ENCODE measurements at regions of chr3 and their contacts with region 1.

Region 1: GRCh38 chr3:69178838-69179739 is 56.7 kb upstream of the LMOD3 start:
- DNase-seq: no peak
- H3K4me3 ChIP-seq: no peak overlapping the region
- H3K27ac ChIP-seq: peak overlapping the region in 3 of 4 donors; percentile 27 to 47 (median 39)
- H3K4me1 ChIP-seq: peaks cover 0 to 41% (median 6%) of the 10 kb centered on the region in 3 donors
- H3K27me3 ChIP-seq: no peaks in the 10 kb centered on the region
- CTCF ChIP-seq: peak in 1 of 6 experiments; percentile 22
- POLR2A ChIP-seq: no peak

Region 2: DNA sequence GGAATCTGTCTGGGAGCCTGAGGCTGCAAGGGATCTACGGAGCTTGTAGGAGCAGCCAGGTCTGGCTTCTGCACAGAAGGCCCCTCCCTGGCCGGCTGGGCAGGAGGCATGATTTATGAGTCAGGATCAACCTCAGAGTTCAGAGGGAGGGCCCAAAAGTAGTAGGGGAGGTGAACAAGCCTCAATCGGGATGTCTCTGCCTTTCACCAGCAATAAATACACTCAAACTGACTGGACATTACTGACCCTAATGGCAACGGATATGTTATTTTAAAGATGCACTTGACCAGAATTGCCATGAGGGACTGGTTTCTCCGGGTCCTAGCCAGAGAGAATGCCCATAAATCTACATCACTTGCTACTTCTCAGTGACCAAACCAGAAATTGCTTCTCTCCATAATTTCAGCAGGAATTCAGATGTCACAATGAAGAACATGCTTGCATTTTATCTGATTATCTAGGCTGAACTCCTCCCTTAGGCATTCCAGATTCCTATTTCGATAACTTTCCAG is 52.9 kb after region 1 on chr3:
- intact Hi-C with region 1: loop called (anchors 10 kb)
- DNase-seq: no peak
- H3K4me3 ChIP-seq: no peak overlapping the region
- H3K27ac ChIP-seq: peak overlapping the region; percentile 37 to 78 (median 68)
- H3K4me1 ChIP-seq: peaks cover 10 to 73% (median 26%) of the 10 kb centered on the region in 3 donors
- H3K27me3 ChIP-seq: no peaks in the 10 kb centered on the region
- CTCF ChIP-seq: no peak
- POLR2A ChIP-seq: no peak

Measured in esophagus squamous epithelium (tissue), 5 donors.